ENCODE measurements at regions of chr6 and their contacts with region 1.

Region 1: GRCh38 chr6:43369174-43370022 is at the start of gene ZNF318:
- DNase-seq: peak; percentile 89 to 99 (median 96)

Region 2: DNA sequence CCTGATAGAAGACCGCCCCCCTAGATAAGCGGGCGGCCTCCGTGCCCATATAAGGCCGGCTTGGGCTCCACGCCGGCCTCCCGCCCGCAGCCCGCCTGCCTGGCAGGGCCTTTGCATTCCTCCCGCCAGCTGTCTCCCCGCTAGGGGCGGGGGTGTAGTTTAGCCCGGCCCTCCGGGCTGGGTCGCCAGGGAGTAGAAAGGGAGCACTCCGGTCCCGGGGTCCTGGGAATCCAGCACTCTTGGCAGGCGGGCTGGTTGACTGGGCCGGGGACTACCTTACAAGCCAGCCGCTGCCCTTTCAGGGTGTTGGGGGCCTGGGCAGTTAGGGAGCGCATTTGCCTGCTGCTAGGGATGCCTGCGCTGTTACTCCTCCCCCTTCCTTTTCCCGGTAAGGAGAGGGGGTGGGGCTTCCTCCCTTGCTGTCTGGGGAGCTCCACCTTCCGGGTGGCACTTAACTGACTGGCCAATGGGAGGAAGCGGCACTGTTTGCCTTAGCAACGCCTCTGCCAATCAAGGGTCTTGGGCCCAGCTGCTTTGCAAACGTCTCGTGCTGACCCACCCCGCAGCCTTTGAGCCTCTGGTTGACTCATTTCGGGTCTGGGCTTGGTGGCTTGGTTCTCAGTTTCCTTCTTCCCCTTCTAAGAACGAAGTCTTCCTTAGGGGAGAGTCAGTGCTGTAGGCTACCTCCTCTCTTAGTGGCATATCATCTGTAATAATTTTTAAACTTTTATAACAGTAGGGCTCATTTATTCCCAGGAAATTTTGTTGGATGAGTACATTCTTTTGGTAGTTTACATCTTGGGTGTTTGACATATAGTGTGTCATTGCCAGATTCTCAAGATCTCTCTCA is 194.9 kb before region 1 on chr6:
- intact Hi-C with region 1: loop called (anchors 5 kb)
- DNase-seq: peak; percentile 90 to 100 (median 96)

Region 3: GRCh38 chr6:43427406-43428111 is 58.2 kb after region 1 on chr6 and contains the start of gene ABCC10:
- intact Hi-C with region 1: loop called (anchors 10 kb)
- DNase-seq: peak; percentile 87 to 99 (median 92)

Region 4: GRCh38 chr6:43516697-43517504 is 147.5 kb after region 1 on chr6 and contains the starts of genes POLR1C and YIPF3:
- intact Hi-C with region 1: loop called (anchors 5 kb)
- DNase-seq: peak; percentile 92 to 99 (median 98)

Region 5: DNA sequence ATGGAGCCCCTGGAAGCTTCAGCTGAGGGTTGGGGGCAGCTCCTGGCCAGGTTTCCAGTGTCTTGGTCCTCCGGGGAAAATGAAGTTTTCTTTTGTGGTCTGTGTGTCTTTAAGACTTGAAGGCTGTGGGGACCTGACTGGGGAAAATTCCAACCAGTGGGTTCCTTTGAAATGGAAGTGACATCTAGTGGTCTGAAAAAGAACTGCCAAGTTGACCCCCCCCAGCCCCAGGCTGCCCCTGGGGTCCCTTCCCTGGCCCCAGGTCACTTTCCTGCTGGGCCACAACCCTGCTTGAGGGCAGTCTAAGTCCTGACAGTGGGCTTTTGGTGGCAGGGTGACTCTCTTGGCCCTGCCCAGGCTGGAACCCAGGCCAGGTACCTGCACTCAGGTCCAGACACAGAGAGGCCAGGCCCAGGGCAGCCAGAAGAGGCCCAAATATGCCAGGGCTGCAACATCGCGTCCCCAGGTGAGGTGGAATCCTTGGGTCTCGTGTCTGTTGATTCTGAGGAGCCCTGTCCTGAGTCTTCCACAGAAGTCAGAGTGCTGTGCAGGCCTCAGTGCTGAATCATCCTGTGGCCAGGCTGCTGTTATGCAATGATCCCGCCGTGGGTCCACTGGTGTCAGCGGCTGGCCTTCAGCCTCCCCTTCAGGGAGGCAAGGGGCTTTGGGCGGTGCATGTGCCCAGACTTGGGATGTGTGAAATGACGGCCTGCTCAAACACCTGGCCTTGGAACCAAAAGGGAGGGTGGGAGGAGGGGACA is 469.1 kb after region 1 on chr6:
- intact Hi-C with region 1: no loop called
- DNase-seq: no peak